ENCODE measurements at regions of chr9 and their contacts with region 1.

Region 1: DNA sequence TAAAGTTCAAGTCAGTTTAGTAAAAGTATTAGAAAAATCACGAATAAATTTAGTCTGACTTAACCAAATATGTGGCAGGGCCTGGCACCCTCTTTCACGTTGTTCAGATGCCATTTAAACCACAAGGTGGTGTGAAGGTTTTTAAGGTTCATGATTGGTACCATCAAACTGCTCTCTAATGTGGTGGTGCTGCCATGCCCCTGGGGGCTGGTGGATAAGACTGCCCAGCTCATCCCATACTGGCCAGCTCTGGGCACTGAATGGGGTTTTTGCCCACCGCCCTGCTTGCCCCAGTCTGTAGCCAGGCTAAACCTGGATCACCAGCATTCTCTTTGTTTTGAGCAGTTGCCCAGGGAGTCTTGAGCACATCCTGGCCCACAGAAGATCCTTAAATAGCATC is 159.3 kb downstream of the GABBR2 start:
- DNase-seq: no peak
- H3K4me3 ChIP-seq: no peak overlapping the region
- H3K27ac ChIP-seq: no peak overlapping the region
- H3K4me1 ChIP-seq: no peaks in the 10 kb centered on the region
- H3K27me3 ChIP-seq: no peaks in the 10 kb centered on the region
- CTCF ChIP-seq: no peak
- EP300 ChIP-seq: no peak
- POLR2A ChIP-seq: no peak

Region 2: GRCh38 chr9:98594546-98595160 is 45.3 kb after region 1 on chr9:
- in situ Hi-C with region 1: no loop called
- intact Hi-C with region 1: loop called (anchors 1 kb)
- DNase-seq: no peak
- H3K4me3 ChIP-seq: no peak overlapping the region
- H3K27ac ChIP-seq: no peak overlapping the region
- H3K4me1 ChIP-seq: no peaks in the 10 kb centered on the region
- H3K27me3 ChIP-seq: peaks cover 4% of the 10 kb centered on the region
- CTCF ChIP-seq: no peak
- EP300 ChIP-seq: no peak
- POLR2A ChIP-seq: no peak

Region 3: DNA sequence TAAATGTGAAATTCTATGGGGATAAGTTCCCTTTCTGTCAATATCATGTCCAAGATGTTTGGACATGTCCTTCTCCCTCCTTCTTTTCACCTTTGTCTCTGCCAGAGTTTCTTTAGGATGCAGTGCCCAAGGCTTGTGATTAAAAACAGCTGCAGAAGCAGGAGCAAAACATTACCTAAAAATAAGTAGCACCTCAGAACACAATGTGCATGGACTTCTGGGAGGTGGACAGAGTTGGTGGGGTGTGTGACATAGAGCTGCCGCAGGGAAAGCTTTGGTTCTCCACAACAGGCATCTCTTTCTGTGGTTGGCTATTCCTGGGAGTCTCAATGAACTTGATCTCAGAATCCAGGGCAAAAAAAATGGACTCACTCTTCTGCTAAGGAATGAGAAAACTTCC is 769.6 kb after region 1 on chr9:
- in situ Hi-C with region 1: no loop called
- intact Hi-C with region 1: no loop called
- DNase-seq: no peak
- H3K4me3 ChIP-seq: no peak overlapping the region
- H3K27ac ChIP-seq: no peak overlapping the region
- H3K4me1 ChIP-seq: no peaks in the 10 kb centered on the region
- H3K27me3 ChIP-seq: peaks cover 4% of the 10 kb centered on the region
- CTCF ChIP-seq: no peak
- EP300 ChIP-seq: no peak
- POLR2A ChIP-seq: no peak